Common myeloid progenitor, CD34-positive (primary cell): ENCODE measurements at regions of chr6 and their contacts with region 1.

Region 1: DNA sequence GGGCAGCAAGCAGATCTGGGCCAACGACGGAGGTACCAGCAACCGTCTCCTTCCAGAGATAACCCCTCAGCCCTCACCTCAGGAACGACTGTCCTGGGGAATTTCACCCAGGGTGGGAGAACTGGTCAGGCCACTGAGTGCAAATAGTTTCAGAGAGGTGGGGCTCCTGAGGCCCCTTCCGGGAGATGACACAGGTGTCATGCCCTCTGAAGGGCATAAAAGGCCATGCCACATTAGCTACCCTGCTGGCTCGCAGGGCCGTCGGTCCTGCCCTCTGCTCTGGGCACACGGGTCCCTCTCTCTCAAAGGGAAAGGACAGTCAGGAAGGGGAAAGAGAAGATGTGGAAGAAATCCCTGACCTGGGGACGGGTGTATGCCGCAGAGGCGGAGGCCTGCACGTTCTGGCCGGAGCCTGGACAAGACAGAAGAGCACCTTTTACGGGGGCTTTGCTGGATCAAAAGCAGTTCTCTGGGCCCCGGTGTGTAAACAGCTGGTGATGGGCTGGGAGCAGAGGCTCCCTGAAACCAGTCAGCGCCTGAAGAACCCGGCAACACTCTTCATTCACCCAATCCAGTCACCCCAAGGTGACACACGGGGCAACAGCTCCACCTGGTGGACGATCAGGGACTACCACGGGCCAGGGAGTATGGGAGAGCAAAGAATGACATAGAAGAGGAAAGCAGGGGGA is 6.4 kb upstream of the TAF8 start:
- DNase-seq: peak; percentile 80 to 90 (median 86)
- H3K4me3 ChIP-seq: no peak overlapping the region
- H3K27ac ChIP-seq: no peak overlapping the region
- H3K4me1 ChIP-seq: peaks cover 31 to 87% (median 79%) of the 10 kb centered on the region in 4 experiments
- H3K27me3 ChIP-seq: no peaks in the 10 kb centered on the region

Region 2: DNA sequence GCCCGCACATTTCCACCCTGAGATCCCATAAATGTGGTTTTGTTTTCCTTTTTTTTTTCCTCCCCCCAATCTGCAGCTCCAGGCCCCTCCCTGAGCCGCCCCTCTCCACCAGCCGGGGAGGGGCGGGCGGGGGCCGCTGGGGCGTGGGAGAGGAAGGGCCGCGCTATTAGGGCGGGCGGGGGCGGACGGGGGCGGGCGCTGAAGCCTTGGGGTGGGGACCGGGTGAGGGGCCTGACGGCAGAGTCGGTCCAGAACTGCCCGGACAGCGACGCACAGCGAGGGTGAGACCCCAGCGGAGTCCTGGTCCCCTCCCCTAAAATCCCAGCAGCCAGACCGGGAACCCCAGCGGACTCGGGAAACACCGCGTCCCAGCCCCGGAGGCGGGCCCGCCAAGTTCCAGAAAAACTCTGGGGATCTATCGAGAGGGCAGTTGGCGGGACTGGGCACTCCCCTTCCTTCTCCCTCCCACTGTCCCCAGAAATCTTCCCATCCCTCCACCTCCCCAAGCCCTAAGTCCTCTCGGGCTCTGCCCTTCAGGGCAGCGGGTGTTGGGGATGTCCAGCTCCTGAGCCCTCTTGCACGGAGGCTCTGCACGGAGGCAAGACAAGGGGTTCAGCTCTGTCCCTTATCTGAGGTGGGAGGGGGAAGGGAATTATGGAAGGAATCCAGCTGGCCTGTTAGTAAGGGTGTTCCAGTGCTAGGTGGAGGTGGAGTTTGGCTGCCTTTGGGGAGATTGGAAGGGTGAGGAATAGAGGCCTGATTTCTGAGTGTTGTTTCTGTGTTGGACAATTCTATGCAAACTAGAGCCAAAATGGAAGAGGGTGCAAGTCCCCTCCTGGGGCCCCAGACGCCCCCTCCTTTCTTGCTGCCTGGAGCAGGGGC is 263.1 kb before region 1 on chr6 and contains the start of gene PRICKLE4:
- CTCF ChIA-PET with region 1: interaction called, 43 read pairs
- POLR2A ChIA-PET with region 1: no interaction called
- DNase-seq: peak in 1 of 3 donors; percentile 22
- H3K4me3 ChIP-seq: peak within 1 kb of the TSS; percentile 52 to 85 (median 74)
- H3K27ac ChIP-seq: peak within 1 kb of the TSS in 1 of 2 experiments; percentile 69
- H3K4me1 ChIP-seq: peaks cover 24 to 58% (median 47%) of the 10 kb centered on the region in 4 experiments
- H3K27me3 ChIP-seq: no peaks in the 10 kb centered on the region

Region 3: DNA sequence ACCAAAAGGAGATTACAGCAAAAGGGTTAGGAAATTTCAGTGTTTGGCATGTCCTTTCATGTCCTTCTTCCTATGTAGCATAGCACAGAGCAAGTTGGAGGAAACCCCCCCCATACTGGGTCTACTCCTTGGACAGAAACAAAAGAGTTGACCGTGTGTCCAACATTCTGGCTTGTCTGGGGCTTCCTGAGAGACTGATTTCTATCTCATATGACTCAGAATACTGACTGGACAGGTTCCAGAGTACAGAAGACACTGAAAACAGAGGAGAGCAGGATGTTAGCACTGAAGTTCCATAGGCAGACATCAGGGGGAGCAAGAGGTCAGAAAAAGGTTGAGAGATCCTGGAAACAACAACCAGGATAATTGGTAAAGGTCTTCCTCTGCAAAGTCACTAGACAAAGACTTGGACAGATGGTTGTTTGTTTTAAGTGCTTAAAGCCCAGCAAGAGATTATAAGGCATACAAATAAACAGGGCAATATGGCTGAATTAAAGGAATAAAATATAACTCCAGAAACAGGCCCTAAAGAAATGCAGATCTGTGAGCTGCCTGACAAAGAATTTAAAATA is 197.2 kb before region 1 on chr6:
- CTCF ChIA-PET with region 1: interaction called, 105 read pairs
- POLR2A ChIA-PET with region 1: no interaction called
- DNase-seq: peak; percentile 61 to 75 (median 65)
- H3K4me3 ChIP-seq: no peak overlapping the region
- H3K27ac ChIP-seq: peak overlapping the region in 1 of 2 experiments; percentile 56
- H3K4me1 ChIP-seq: peaks cover 0 to 1% (median 0%) of the 10 kb centered on the region in 4 experiments
- H3K27me3 ChIP-seq: no peaks in the 10 kb centered on the region

Region 4: DNA sequence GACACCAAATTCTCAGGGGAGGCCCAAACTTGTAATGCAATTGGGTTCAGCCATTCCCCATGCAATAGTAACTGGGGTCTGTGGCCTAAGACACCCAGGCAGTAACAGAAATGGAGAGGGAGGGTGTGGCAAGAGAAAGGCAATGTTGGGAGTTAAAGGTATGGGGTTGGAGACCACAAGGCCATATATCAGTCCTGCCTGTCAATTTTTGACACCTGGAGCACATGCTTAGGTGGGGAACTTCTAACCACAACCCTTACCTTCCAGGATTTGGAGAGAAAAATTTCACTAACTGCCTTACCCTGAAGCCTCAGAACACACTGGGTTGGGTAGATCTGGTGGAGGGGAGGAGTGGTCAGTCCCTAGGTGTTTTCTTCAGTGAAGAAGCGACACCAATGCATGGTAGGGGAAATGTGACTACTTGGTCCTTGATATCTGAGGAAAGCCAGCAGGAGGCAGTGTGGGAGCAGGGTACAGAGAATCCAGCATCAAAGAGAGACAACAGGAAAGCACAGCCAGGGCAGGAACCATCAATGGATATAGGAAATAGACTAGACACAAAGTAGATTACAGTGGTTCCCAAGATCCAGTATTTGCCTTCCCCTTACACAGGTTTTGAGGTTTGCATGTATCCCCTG is 141.9 kb before region 1 on chr6:
- CTCF ChIA-PET with region 1: interaction called, 19 read pairs
- POLR2A ChIA-PET with region 1: no interaction called
- DNase-seq: peak; percentile 41 to 67 (median 44)
- H3K4me3 ChIP-seq: no peak overlapping the region
- H3K27ac ChIP-seq: no peak overlapping the region
- H3K4me1 ChIP-seq: peaks cover 0 to 2% (median 0%) of the 10 kb centered on the region in 4 experiments
- H3K27me3 ChIP-seq: no peaks in the 10 kb centered on the region

Region 5: GRCh38 chr6:42009966-42010891 is 33.7 kb before region 1 on chr6:
- CTCF ChIA-PET with region 1: interaction called, 14 read pairs
- POLR2A ChIA-PET with region 1: no interaction called
- DNase-seq: peak; percentile 33 to 68 (median 59)
- H3K4me3 ChIP-seq: peak overlapping the region in 5 of 7 experiments; percentile 1 to 63 (median 42)
- H3K27ac ChIP-seq: peak overlapping the region in 1 of 2 experiments; percentile 72
- H3K4me1 ChIP-seq: peaks cover 32 to 57% (median 53%) of the 10 kb centered on the region in 4 experiments
- H3K27me3 ChIP-seq: no peaks in the 10 kb centered on the region

Region 6: DNA sequence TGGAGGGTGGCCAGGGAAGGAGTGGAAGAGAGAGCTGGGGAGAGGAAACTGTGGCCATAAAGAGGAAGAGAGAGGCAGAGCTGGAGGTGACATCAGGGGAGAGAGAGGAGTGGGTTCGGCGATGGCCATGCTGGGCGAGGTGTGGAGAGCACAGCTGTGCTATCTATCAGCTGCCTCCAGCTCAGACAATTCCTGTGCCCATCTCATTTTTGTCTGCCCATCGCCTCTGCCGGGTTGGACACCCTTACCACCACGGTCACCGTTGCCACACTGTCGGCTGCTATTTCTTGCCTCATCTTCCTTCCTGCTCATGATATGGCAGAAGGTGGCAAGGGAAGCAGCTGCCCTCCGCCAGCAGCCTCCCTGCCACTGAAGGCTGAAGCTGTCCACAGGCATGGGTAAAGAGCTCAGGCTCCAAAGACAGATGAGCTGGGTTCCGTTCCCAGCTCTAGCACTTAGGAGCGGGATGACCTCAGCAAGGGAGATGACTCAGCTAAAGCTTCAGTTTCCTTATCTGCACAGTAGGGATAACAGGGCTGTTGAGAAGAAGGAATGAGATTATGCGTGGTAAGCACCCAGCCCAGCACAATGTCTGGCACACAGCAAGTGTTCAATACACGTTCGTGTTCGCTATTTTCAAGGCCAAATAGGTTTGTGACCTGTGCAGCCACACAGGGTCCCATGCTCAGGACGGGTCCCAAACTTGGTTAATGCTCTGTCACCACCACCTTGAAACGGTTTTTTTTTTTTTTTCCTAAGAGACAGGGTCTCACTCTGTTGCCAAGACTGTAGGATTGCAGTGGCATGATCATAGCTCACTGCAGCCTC is 15.5 kb before region 1 on chr6:
- CTCF ChIA-PET with region 1: interaction called, 97 read pairs
- POLR2A ChIA-PET with region 1: interaction called, 3 read pairs
- DNase-seq: peak; percentile 75 to 89 (median 86)
- H3K4me3 ChIP-seq: peak overlapping the region in 3 of 7 experiments; percentile 19 to 40 (median 29)
- H3K27ac ChIP-seq: peak overlapping the region in 1 of 2 experiments; percentile 81
- H3K4me1 ChIP-seq: peaks cover 8 to 73% (median 59%) of the 10 kb centered on the region in 4 experiments
- H3K27me3 ChIP-seq: no peaks in the 10 kb centered on the region

Region 7: DNA sequence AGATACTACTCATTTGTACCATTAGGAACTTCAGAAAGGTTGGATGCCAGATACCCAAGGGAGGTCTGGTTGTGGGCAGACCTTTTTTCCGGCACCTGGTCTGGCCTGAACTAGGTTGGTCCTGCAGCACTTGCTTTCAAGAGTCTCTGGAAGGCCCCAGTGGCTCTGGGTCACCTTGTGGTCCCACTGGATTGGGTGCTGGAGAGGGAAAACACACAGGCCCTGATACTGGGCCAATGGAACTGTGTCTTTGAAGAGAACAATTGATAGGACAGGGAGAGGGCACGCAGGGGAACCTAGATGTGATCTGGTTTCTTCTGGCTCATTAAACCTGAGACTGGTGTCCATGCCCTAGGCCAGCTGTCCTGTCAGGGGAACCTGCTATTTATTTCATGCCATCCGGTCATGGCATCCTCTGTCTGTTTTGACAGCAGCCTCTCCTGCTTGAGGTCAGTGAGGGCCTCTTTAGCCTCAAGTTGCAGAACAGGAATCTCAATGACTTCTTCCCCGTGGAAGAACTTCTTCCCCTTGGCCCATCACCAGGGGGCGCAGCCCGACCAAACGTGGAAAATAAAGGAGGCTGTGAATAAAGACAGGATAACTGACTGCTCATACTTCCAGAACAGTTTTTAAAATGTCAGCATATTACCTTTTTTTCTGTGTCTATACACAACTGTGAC is 31.4 kb after region 1 on chr6:
- CTCF ChIA-PET with region 1: no interaction called
- POLR2A ChIA-PET with region 1: no interaction called
- DNase-seq: peak; percentile 60 to 78 (median 68)
- H3K4me3 ChIP-seq: no peak overlapping the region
- H3K27ac ChIP-seq: no peak overlapping the region
- H3K4me1 ChIP-seq: no peaks in the 10 kb centered on the region
- H3K27me3 ChIP-seq: no peaks in the 10 kb centered on the region